Caco-2 (cell line): ENCODE measurements at regions of chr7 and their contacts with region 1.

Region 1: GRCh38 chr7:143240291-143241168 is 18.7 kb downstream of the TAS2R40 start:
- DNase-seq: peak; percentile 74 to 77
- H3K4me3 ChIP-seq: no peak overlapping the region
- H3K4me3 Mint-ChIP-seq: no peak overlapping the region
- H3K27ac Mint-ChIP-seq: no peak overlapping the region
- H3K4me1 ChIP-seq: peaks cover 22% of the 10 kb centered on the region
- H3K4me1 Mint-ChIP-seq: peaks cover 13% of the 10 kb centered on the region
- H3K27me3 ChIP-seq: no peaks in the 10 kb centered on the region
- H3K27me3 Mint-ChIP-seq: peaks cover 9% of the 10 kb centered on the region
- CTCF ChIP-seq: peak; percentile 86 to 91

Region 2: DNA sequence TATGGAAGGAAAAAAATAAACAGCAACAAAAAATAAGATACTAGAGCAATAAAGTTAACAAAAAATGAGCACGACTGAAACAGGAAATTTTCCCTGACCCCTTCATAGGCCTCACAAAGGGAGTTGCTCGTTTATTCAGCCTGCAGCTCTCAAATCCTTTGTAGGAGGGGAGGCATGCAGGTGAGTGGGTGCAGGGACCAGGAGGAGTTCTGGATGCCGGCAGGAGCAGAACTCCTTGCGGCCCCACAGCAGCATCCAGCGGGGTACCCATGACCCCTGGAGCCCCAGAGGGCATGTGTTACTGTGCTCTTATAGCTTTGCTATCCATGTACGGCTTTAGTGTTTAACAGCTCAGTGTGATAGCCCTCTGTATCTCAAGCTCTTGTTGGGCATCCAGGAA is 51.5 kb before region 1 on chr7:
- CTCF ChIA-PET with region 1: no interaction called
- POLR2A ChIA-PET with region 1: no interaction called
- intact Hi-C with region 1: no loop called
- DNase-seq: no peak
- H3K4me3 ChIP-seq: no peak overlapping the region
- H3K4me3 Mint-ChIP-seq: no peak overlapping the region
- H3K27ac Mint-ChIP-seq: no peak overlapping the region
- H3K4me1 ChIP-seq: no peaks in the 10 kb centered on the region
- H3K4me1 Mint-ChIP-seq: no peaks in the 10 kb centered on the region
- H3K27me3 ChIP-seq: no peaks in the 10 kb centered on the region; the same call in 1 of the 2 replicates
- H3K27me3 Mint-ChIP-seq: peaks cover 12% of the 10 kb centered on the region
- CTCF ChIP-seq: no peak

Region 3: GRCh38 chr7:143263266-143264195 is 23.0 kb after region 1 on chr7 and contains the start of gene GSTK1:
- CTCF ChIA-PET with region 1: interaction called, 30 read pairs
- POLR2A ChIA-PET with region 1: interaction called, 9 read pairs
- intact Hi-C with region 1: loop called (anchors 1 kb)
- DNase-seq: peak; percentile 84 to 89
- H3K4me3 ChIP-seq: peak within 1 kb of the TSS; percentile 66
- H3K4me3 Mint-ChIP-seq: peak within 1 kb of the TSS; percentile 94
- H3K27ac Mint-ChIP-seq: peak within 1 kb of the TSS; percentile 97
- H3K4me1 ChIP-seq: peaks cover 28% of the 10 kb centered on the region
- H3K4me1 Mint-ChIP-seq: peaks cover 32% of the 10 kb centered on the region
- H3K27me3 ChIP-seq: no peaks in the 10 kb centered on the region
- H3K27me3 Mint-ChIP-seq: no peaks in the 10 kb centered on the region
- CTCF ChIP-seq: no peak
- total RNA-seq, gene GSTK1: 127 and 134 TPM in 2 replicates

Region 4: GRCh38 chr7:143299840-143300239 is 59.3 kb after region 1 on chr7:
- CTCF ChIA-PET with region 1: interaction called, 10 read pairs
- POLR2A ChIA-PET with region 1: interaction called, 5 read pairs
- intact Hi-C with region 1: loop called (anchors 1 kb)
- DNase-seq: peak; percentile 71 to 77
- H3K4me3 ChIP-seq: no peak overlapping the region
- H3K4me3 Mint-ChIP-seq: no peak overlapping the region
- H3K27ac Mint-ChIP-seq: no peak overlapping the region
- H3K4me1 ChIP-seq: peaks cover 18% of the 10 kb centered on the region
- H3K4me1 Mint-ChIP-seq: peaks cover 26% of the 10 kb centered on the region
- H3K27me3 ChIP-seq: no peaks in the 10 kb centered on the region
- H3K27me3 Mint-ChIP-seq: no peaks in the 10 kb centered on the region
- CTCF ChIP-seq: peak; percentile 68 to 71

Region 5: GRCh38 chr7:143367972-143368371 is 127.4 kb after region 1 on chr7:
- CTCF ChIA-PET with region 1: interaction called, 10 read pairs
- POLR2A ChIA-PET with region 1: no interaction called
- intact Hi-C with region 1: loop called (anchors 1 kb)
- DNase-seq: peak in 1 of 2 experiments; percentile 32
- H3K4me3 ChIP-seq: no peak overlapping the region
- H3K4me3 Mint-ChIP-seq: no peak overlapping the region
- H3K27ac Mint-ChIP-seq: peak overlapping the region; percentile 96
- H3K4me1 ChIP-seq: peaks cover 49% of the 10 kb centered on the region
- H3K4me1 Mint-ChIP-seq: peaks cover 54% of the 10 kb centered on the region
- H3K27me3 ChIP-seq: no peaks in the 10 kb centered on the region
- H3K27me3 Mint-ChIP-seq: no peaks in the 10 kb centered on the region
- CTCF ChIP-seq: no peak

Region 6: GRCh38 chr7:143380255-143380645 is 139.7 kb after region 1 on chr7:
- CTCF ChIA-PET with region 1: interaction called, 9 read pairs
- POLR2A ChIA-PET with region 1: interaction called, 3 read pairs
- intact Hi-C with region 1: loop called (anchors 2 kb)
- DNase-seq: peak; percentile 84 to 89
- H3K4me3 ChIP-seq: peak overlapping the region; percentile 70
- H3K4me3 Mint-ChIP-seq: peak overlapping the region; percentile 85
- H3K27ac Mint-ChIP-seq: peak overlapping the region; percentile 90
- H3K4me1 ChIP-seq: peaks cover 44% of the 10 kb centered on the region
- H3K4me1 Mint-ChIP-seq: peaks cover 14% of the 10 kb centered on the region
- H3K27me3 ChIP-seq: no peaks in the 10 kb centered on the region
- H3K27me3 Mint-ChIP-seq: no peaks in the 10 kb centered on the region
- CTCF ChIP-seq: peak; percentile 89 to 92

Region 7: DNA sequence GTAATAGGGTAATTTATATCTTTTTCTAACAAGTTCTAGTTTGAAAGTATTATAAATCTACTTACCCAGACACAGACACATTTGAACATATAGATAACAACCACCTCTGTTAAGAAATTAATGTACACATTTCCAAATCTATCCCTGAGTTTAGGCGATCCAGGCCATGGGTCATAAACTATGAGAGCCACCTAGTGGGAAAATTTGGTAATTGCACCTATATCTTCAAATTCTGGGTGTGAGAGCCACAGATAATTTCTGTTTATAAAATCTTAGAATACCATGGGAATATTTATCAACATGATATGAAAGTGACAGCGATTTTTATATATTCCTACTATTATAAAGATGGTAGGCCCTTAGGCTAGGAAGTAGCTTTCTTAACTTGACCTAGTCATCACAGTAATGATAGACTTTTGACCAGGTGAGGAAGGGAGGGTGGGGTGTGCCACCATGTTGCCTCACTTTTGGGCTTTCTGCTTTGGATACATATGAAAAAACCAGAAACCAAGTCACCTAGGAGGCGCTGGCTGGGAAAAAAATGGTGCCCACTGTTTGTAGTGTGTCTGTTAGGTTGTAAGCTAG is 176.1 kb after region 1 on chr7:
- CTCF ChIA-PET with region 1: interaction called, 6 read pairs
- POLR2A ChIA-PET with region 1: no interaction called
- intact Hi-C with region 1: loop called (anchors 1 kb)
- DNase-seq: peak in 1 of 2 experiments; percentile 66
- H3K4me3 ChIP-seq: no peak overlapping the region
- H3K4me3 Mint-ChIP-seq: no peak overlapping the region
- H3K27ac Mint-ChIP-seq: no peak overlapping the region
- H3K4me1 ChIP-seq: peaks cover 17% of the 10 kb centered on the region
- H3K4me1 Mint-ChIP-seq: peaks cover 35% of the 10 kb centered on the region
- H3K27me3 ChIP-seq: no peaks in the 10 kb centered on the region
- H3K27me3 Mint-ChIP-seq: no peaks in the 10 kb centered on the region
- CTCF ChIP-seq: peak; percentile 70 to 75